ENCODE measurements at regions of chr13 and their contacts with region 1.

Region 1: DNA sequence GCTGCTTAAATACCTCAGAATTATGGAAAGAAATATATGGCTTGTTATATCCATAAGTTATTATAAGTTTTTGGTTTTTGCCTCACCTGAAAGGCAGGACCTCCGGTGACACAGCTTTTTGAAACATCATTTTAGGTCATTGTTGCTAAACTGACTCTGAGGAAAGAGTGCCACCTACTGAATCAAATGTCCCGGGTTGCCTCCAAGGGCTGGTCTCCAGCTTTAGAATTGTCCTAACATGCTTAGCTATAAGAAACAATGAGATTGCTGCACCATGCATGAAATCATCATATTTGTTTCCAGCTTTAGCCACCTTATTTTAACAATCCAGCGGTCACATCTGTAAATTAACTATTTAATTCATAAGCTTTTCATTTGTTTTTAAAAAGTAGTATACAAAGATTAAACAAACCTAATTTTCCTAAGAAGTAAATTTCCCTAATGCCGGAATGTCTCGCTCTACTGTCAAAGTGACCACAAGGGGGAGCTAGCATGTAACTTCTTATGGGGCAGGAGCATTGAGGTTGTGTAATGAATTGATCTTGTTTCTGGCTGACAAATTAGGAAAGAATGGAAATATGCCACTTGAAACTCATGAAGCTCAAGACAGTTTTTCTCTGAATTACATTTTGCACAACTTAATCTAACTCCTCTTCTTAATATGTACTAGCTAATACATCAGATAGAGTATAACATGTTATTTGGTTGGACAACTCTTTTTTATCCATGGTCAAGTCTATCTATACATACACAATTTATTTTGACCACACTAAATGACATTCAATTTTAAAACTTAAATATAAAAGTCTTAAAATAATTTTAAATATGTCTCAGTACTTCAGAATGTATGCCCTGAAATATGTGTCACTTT is 6.7 kb upstream of the PCDH17 start:
- DNase-seq: peak; percentile 31
- CTCF ChIP-seq: peak; percentile 80

Region 2: DNA sequence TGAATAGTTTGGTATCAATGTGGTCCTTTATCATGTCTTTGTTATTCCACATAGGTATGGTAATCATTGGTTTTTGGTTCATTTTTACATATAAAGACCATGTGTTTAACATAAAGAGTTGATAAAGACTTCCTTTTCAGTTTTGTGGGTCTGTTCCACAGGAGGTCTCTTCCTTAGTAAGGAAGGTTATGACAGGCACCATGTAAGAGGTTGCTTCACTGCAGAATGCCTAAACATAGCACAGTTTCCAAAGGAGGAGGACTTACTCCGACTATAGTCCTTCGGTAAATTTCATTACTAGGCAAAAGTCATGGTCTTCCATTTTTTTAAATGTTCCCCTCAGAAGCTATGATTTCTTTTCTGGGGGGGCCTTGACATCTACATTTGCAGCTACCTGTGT is 20.4 kb before region 1 on chr13:
- CTCF ChIA-PET with region 1: interaction called, 10 read pairs
- POLR2A ChIA-PET with region 1: no interaction called
- DNase-seq: no peak
- CTCF ChIP-seq: no peak

Region 3: GRCh38 chr13:57612568-57612967 is 12.2 kb before region 1 on chr13:
- CTCF ChIA-PET with region 1: interaction called, 12 read pairs
- POLR2A ChIA-PET with region 1: no interaction called
- DNase-seq: no peak
- CTCF ChIP-seq: no peak